ENCODE measurements at regions of chr22 and their contacts with region 1.

Region 1: DNA sequence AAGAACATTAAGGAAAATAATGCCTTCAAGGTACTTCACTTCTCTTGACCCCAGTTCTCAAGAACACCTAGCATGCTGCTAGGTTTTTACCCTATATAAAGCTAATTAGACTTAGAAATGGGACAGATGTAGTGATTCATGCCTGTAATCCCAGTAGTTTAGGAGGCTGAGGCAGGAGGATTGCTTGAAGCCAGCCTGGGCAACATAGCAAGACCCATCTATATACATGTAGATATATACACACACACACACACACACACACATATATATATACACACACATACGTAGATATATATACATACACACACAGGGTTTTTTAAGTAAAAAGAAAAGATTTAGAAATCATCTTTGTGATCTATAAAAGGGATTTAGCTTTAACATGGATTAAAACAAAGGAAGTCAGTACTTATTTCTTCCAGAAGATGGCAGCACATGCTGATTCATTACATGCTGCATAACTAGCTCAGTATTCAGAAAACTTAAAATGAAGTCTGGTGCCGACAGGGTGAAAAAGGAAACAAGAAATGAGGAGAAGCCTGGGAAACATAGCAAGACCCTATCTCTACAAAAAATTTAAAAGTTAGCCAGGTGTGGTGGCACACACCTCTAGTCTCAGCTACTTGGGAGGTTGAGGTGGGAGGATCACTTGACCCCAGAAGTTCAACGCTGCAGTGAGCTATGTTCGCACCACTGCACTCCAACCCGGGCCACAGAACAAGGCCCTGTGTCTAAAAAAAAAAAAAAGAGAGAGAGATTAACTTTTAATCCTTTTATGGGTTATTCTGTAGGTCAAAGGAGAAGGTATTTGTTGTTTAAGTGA is 28.5 kb upstream of the RBX1 start:
- DNase-seq: no peak
- ATAC-seq: peak; percentile 61 to 89 (median 69)
- H3K4me3 ChIP-seq: no peak overlapping the region
- H3K27ac ChIP-seq: no peak overlapping the region
- H3K4me1 ChIP-seq: no peaks in the 10 kb centered on the region
- H3K27me3 ChIP-seq: no peaks in the 10 kb centered on the region
- CTCF ChIP-seq: peak; percentile 74

Region 2: GRCh38 chr22:41132550-41132949 is 209.9 kb after region 1 on chr22:
- intact Hi-C with region 1: loop called in 1 of 2 experiments (anchors 10 kb)
- DNase-seq: no peak
- ATAC-seq: no peak
- H3K4me3 ChIP-seq: no peak overlapping the region
- H3K27ac ChIP-seq: no peak overlapping the region
- H3K4me1 ChIP-seq: no peaks in the 10 kb centered on the region
- H3K27me3 ChIP-seq: no peaks in the 10 kb centered on the region
- CTCF ChIP-seq: no peak

Region 3: DNA sequence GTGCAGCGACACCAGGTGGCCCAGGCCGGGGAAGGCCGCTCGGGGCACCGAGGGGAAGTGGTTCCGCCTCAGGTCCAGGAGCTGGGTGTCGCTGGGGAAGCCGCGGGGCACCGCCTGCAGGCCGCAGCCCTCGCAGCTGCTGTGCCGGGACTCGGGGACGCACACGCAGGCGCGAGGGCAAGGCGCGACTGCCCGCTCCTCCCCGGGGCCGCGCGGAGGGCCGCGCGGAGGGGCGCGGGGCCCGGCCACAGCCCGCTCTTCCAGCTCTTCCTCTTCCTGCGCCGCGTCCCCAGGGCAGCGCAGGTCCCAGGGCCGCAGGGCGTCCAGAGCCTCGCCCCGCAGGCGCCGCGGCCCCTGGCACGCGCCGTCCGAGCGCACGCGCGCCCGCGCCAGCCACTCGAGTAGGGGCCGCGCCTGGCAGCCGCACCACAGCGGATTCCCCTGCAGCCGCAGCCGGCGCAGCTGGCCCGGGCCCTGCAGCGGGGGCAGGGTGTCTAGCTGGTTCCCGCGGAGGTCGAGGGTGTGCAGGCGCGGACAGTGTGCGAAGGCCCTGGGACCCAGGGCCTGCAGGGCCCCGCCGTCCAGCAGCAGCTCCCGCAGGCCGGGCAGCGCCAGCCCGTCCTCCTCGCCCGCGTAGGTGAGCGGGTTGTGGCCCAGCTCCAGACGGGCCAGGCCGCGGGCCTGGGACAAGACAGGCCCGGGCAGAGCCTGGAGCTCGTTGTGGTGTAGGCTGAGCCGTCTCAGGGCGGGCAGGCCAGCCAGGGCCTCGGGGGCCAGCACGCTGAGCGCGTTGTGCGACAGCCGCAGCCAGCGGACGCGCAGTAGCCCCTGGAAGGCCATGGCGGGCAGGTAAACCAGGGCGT is 315.2 kb after region 1 on chr22:
- intact Hi-C with region 1: loop called in 1 of 2 experiments (anchors 2 kb)
- DNase-seq: peak; percentile 64 to 84
- ATAC-seq: peak; percentile 63 to 76 (median 69)
- H3K4me3 ChIP-seq: peak overlapping the region; percentile 61
- H3K27ac ChIP-seq: no peak overlapping the region
- H3K4me1 ChIP-seq: peaks cover 5% of the 10 kb centered on the region
- H3K27me3 ChIP-seq: no peaks in the 10 kb centered on the region
- CTCF ChIP-seq: peak; percentile 54

Measured in psoas muscle (tissue), 8 donors.